Transverse colon (tissue), 4 donors: ENCODE measurements at regions of chr11 and their contacts with region 1.

Region 1: GRCh38 chr11:110338684-110339083 is 42.3 kb upstream of the RDX start:
- DNase-seq: no peak
- H3K4me3 ChIP-seq: no peak overlapping the region
- H3K27ac ChIP-seq: no peak overlapping the region
- H3K4me1 ChIP-seq: no peaks in the 10 kb centered on the region
- H3K27me3 ChIP-seq: no peaks in the 10 kb centered on the region
- CTCF ChIP-seq: no peak
- EP300 ChIP-seq: no peak
- POLR2A ChIP-seq: no peak

Region 2: GRCh38 chr11:110219011-110219785 is 119.5 kb before region 1 on chr11:
- in situ Hi-C with region 1: no loop called
- intact Hi-C with region 1: no loop called
- DNase-seq: no peak
- H3K4me3 ChIP-seq: no peak overlapping the region
- H3K27ac ChIP-seq: no peak overlapping the region
- H3K4me1 ChIP-seq: no peaks in the 10 kb centered on the region
- H3K27me3 ChIP-seq: no peaks in the 10 kb centered on the region
- CTCF ChIP-seq: no peak
- EP300 ChIP-seq: no peak
- POLR2A ChIP-seq: no peak

Region 3: DNA sequence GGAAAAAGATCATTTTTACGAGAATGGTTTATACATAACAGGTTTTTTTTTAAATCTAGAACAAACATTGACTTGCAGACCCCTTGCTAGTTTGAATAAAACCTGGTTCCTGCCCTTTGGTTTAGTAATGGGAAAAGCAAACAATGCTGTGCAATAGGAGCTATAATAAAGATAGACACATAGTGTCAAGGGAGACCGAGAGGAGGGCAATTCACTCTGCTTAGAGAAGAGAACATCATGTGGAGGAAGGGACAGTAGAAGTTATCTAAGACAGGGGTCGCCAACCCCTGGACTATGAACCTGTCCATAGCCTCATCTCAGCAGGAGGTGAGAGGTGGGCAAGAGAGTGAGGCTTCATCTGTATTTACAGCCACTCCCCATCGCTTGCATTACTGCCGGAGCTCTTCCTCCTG is 35.3 kb before region 1 on chr11:
- in situ Hi-C with region 1: no loop called
- intact Hi-C with region 1: loop called (anchors 1 kb)
- DNase-seq: no peak
- H3K4me3 ChIP-seq: no peak overlapping the region
- H3K27ac ChIP-seq: no peak overlapping the region
- H3K4me1 ChIP-seq: peaks cover 0 to 10% (median 7%) of the 10 kb centered on the region in 4 donors
- H3K27me3 ChIP-seq: peaks cover 56% of the 10 kb centered on the region
- CTCF ChIP-seq: no peak
- EP300 ChIP-seq: no peak
- POLR2A ChIP-seq: no peak